ENCODE measurements at regions of chr17 and their contacts with region 1.

Region 1: DNA sequence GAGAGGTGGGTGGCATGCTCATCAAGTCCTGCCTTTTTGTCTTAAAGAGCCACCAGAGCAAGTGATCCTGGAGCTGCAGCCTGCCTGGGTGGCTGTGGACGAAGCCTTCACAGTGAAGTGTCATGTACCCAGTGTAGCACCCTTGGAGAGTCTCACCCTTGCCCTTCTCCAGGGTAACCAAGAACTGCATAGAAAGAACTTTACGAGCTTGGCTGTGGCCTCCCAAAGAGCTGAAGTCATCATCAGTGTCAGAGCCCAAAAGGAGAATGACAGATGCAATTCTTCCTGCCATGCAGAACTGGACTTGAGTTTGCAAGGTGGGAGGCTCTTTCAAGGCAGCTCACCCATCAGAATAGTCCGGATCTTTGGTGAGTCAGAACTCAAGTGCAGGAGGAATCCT is 14.2 kb downstream of the CSH2 start:
- DNase-seq: no peak
- H3K4me3 Mint-ChIP-seq: no peak overlapping the region
- H3K27ac Mint-ChIP-seq: no peak overlapping the region
- H3K4me1 Mint-ChIP-seq: no peaks in the 10 kb centered on the region
- H3K27me3 Mint-ChIP-seq: peaks cover 30% of the 10 kb centered on the region
- CTCF ChIP-seq: no peak

Region 2: GRCh38 chr17:63848834-63849700 is 10.2 kb before region 1 on chr17:
- CTCF ChIA-PET with region 1: interaction called, 10 read pairs
- intact Hi-C with region 1: no loop called
- DNase-seq: peak; percentile 92
- H3K4me3 Mint-ChIP-seq: peak overlapping the region; percentile 48
- H3K27ac Mint-ChIP-seq: peak overlapping the region; percentile 84
- H3K4me1 Mint-ChIP-seq: no peaks in the 10 kb centered on the region
- H3K27me3 Mint-ChIP-seq: no peaks in the 10 kb centered on the region
- CTCF ChIP-seq: peak; percentile 64